Naive thymus-derived CD4-positive, alpha-beta T cell (primary cell): ENCODE measurements at regions of chr7 and their contacts with region 1.

Region 1: DNA sequence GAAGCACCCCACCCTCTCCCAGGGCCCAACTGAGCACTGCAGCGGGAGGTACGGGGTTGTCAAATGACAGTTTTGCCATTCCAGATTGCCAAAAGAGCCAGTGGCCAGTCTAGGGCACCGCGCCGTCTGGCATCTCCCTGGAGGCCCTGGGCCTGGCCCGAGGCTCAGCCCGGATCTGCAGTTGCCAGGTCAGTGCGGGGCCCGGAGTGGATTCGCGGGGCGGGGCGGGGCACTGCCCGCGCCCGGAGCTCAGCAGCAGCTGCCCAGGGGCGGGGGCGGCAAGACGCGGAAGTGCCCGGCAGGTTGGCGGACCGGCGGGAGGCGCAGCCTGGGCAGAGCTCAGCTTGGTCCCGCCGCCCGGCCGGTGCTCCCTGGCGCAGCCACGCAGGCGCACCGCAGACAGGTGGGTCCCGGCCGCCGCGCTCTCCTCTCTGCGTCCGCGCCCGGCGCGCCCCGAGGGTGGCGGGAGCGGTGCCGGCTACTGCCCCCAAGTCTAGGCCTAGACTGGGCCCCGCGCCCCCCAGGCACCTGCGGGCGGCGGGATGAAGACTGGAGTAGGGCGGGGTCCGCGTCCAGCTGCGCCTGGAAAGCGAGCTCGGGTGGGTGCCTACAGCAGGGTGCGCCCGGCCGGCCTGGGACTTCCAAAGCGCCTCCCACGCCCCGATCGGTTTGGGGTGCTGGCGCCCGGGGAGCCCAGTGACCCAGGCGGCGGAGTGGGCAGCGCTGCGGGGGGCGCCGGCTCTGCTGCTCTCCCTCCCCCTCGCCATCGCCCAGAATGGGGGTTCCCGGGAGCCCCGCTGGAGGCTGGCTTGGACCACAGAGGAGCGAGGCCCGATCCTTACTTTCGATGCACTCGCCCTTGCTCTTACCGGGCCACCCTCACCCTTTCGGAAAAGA is at the start of gene IRF5:
- DNase-seq: peak in 1 of 9 donors; percentile 62
- ATAC-seq: peak; percentile 40
- H3K4me3 ChIP-seq: peak within 1 kb of the TSS; percentile 57
- H3K4me3 Mint-ChIP-seq: peak within 1 kb of the TSS; percentile 78 to 91 (median 87)
- H3K27ac ChIP-seq: no peak within 1 kb of the TSS
- H3K27ac Mint-ChIP-seq: peak within 1 kb of the TSS in 2 of 9 donors; percentile 65 to 79
- H3K4me1 ChIP-seq: peaks cover 6 to 10% of the 10 kb centered on the region in 2 donors
- H3K4me1 Mint-ChIP-seq: peaks cover 23 to 48% (median 27%) of the 10 kb centered on the region in 7 donors
- H3K27me3 ChIP-seq: peaks cover 0 to 4% of the 10 kb centered on the region in 2 donors
- H3K27me3 Mint-ChIP-seq: peaks cover 13 to 37% (median 18%) of the 10 kb centered on the region in 5 donors
- total RNA-seq, gene IRF5: 1.7 to 33.2 (median 4.6) TPM

Region 2: GRCh38 chr7:129054438-129055293 is 116.8 kb after region 1 on chr7 and contains the start of gene TNPO3:
- CTCF ChIA-PET with region 1: no interaction called
- POLR2A ChIA-PET with region 1: no interaction called
- intact Hi-C with region 1: loop called in 1 of 2 experiments (anchors 2 kb)
- DNase-seq: peak; percentile 76 to 90 (median 85)
- ATAC-seq: peak; percentile 92
- H3K4me3 ChIP-seq: peak within 1 kb of the TSS; percentile 96
- H3K4me3 Mint-ChIP-seq: peak within 1 kb of the TSS; percentile 91 to 99 (median 99)
- H3K27ac ChIP-seq: peak within 1 kb of the TSS; percentile 92
- H3K27ac Mint-ChIP-seq: peak within 1 kb of the TSS; percentile 96 to 100 (median 99)
- H3K4me1 ChIP-seq: peaks cover 15 to 18% of the 10 kb centered on the region in 2 donors
- H3K4me1 Mint-ChIP-seq: peaks cover 17 to 51% (median 39%) of the 10 kb centered on the region in 7 donors
- H3K27me3 ChIP-seq: peaks cover 0 to 3% of the 10 kb centered on the region in 2 donors
- H3K27me3 Mint-ChIP-seq: peaks cover 4 to 13% (median 4%) of the 10 kb centered on the region in 5 donors
- total RNA-seq, gene TNPO3: 28.6 to 40.6 (median 39.6) TPM